Activated B cell treated with CpG ODN at 0.5 μM for 24 hours (primary cell): ENCODE measurements at regions of chr7 and their contacts with region 1.

Region 1: GRCh38 chr7:106736508-106737201 is 75.7 kb upstream of the CCDC71L start:
- DNase-seq: no peak
- ATAC-seq: peak; percentile 99
- H3K4me3 Mint-ChIP-seq: peak overlapping the region; percentile 55
- H3K27ac Mint-ChIP-seq: peak overlapping the region; percentile 79
- H3K4me1 Mint-ChIP-seq: peaks cover 19% of the 10 kb centered on the region
- H3K27me3 Mint-ChIP-seq: no peaks in the 10 kb centered on the region
- CTCF ChIP-seq: no peak

Region 2: GRCh38 chr7:105896407-105896911 is 840.2 kb before region 1 on chr7:
- CTCF ChIA-PET with region 1: no interaction called
- POLR2A ChIA-PET with region 1: no interaction called
- intact Hi-C with region 1: no loop called
- DNase-seq: no peak
- ATAC-seq: no peak
- H3K4me3 Mint-ChIP-seq: no peak overlapping the region
- H3K27ac Mint-ChIP-seq: no peak overlapping the region
- H3K4me1 Mint-ChIP-seq: no peaks in the 10 kb centered on the region
- H3K27me3 Mint-ChIP-seq: no peaks in the 10 kb centered on the region
- CTCF ChIP-seq: no peak

Region 3: DNA sequence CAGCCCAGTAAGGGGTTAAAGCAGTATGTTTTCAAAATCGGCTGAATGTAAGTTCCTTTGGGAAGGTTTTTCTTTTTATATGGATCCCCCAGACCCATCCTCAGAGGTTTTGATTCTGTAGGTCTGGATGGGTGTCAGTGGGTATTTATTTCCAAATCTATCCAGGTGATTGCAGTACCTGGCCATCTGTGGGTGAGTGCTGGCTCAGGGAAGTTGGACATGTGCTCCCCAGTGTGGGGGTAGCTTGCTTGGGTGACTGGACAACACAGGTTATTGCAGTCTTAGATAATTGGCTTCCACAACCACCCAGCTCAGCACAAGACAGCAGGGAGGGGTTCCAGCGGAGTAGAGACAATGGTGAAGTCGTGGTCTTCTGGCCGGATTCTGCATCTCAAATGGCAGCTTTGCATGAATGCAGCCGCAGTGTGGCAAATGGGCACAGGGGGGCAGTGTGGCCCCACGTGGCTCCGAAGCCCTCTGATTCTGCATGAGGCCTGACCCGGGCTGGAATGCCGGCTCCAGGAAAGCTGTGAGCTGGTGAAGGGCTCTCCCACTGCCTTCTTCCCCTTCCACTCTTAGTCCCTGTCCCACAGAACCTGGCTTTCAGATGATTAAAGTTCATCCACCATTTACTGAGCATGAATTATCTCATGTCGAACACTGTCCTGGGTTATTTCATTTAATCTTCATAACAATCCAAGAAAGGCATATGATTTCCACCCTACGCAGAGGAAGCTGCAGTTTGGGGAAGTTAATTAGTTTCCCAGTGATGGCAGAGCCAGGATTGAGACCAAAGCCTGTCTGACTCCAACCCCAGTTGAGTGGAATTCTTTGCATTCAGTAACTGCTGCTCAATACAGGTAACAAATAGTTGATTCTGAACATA is 560.0 kb before region 1 on chr7:
- CTCF ChIA-PET with region 1: interaction called, 37 read pairs
- POLR2A ChIA-PET with region 1: interaction called, 6 read pairs
- intact Hi-C with region 1: loop called (anchors 1 kb)
- DNase-seq: peak; percentile 64
- ATAC-seq: peak; percentile 91
- H3K4me3 Mint-ChIP-seq: no peak overlapping the region
- H3K27ac Mint-ChIP-seq: no peak overlapping the region
- H3K4me1 Mint-ChIP-seq: peaks cover 11% of the 10 kb centered on the region
- H3K27me3 Mint-ChIP-seq: peaks cover 4% of the 10 kb centered on the region
- CTCF ChIP-seq: peak; percentile 41

Region 4: GRCh38 chr7:106542550-106543220 is 194.0 kb before region 1 on chr7:
- CTCF ChIA-PET with region 1: interaction called, 166 read pairs
- POLR2A ChIA-PET with region 1: interaction called, 17 read pairs
- intact Hi-C with region 1: loop called (anchors 1 kb)
- DNase-seq: no peak
- ATAC-seq: peak; percentile 90
- H3K4me3 Mint-ChIP-seq: no peak overlapping the region
- H3K27ac Mint-ChIP-seq: no peak overlapping the region
- H3K4me1 Mint-ChIP-seq: peaks cover 4% of the 10 kb centered on the region
- H3K27me3 Mint-ChIP-seq: peaks cover 2% of the 10 kb centered on the region
- CTCF ChIP-seq: no peak

Region 5: DNA sequence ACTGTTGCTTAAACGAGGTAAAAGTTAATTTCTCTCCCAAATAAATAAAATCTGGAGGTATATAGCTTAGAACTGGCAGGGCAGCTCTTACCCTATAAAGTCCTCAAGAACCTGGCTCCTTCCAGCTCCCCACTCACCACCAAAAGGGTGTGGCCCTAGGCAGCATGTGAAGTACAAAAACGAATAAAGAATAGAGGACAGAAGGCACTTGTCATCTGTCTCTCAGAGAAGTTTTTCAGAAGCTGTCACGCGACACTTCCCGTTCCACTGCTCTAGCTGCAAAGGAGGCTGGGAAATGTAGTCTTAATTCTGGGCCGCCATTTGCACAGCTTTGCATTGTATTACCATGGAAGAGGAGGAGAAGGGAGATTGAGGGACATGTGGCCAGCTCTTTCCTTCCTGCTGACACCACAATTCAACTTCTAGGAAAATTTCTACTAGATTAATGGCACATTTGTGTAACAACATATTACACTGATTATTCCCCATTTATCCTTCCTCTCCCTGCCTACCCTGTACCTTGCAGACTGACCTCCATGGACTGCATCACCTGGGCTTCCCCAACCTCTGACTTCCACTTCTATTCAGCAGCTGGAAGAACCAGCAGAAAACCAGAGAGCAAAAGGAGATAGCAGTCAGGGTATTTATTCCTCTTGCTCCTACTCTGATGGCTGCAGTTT is 137.9 kb before region 1 on chr7:
- CTCF ChIA-PET with region 1: interaction called, 10 read pairs
- POLR2A ChIA-PET with region 1: no interaction called
- intact Hi-C with region 1: loop called (anchors 1 kb)
- DNase-seq: peak; percentile 34
- ATAC-seq: peak; percentile 100
- H3K4me3 Mint-ChIP-seq: peak overlapping the region; percentile 52
- H3K27ac Mint-ChIP-seq: peak overlapping the region; percentile 68
- H3K4me1 Mint-ChIP-seq: peaks cover 6% of the 10 kb centered on the region
- H3K27me3 Mint-ChIP-seq: no peaks in the 10 kb centered on the region
- CTCF ChIP-seq: no peak

Region 6: GRCh38 chr7:106704000-106704840 is 32.4 kb before region 1 on chr7:
- CTCF ChIA-PET with region 1: interaction called, 5 read pairs
- POLR2A ChIA-PET with region 1: interaction called, 6 read pairs
- intact Hi-C with region 1: loop called (anchors 5 kb)
- DNase-seq: no peak
- ATAC-seq: peak; percentile 34
- H3K4me3 Mint-ChIP-seq: no peak overlapping the region
- H3K27ac Mint-ChIP-seq: no peak overlapping the region
- H3K4me1 Mint-ChIP-seq: peaks cover 8% of the 10 kb centered on the region
- H3K27me3 Mint-ChIP-seq: no peaks in the 10 kb centered on the region
- CTCF ChIP-seq: no peak

Region 7: DNA sequence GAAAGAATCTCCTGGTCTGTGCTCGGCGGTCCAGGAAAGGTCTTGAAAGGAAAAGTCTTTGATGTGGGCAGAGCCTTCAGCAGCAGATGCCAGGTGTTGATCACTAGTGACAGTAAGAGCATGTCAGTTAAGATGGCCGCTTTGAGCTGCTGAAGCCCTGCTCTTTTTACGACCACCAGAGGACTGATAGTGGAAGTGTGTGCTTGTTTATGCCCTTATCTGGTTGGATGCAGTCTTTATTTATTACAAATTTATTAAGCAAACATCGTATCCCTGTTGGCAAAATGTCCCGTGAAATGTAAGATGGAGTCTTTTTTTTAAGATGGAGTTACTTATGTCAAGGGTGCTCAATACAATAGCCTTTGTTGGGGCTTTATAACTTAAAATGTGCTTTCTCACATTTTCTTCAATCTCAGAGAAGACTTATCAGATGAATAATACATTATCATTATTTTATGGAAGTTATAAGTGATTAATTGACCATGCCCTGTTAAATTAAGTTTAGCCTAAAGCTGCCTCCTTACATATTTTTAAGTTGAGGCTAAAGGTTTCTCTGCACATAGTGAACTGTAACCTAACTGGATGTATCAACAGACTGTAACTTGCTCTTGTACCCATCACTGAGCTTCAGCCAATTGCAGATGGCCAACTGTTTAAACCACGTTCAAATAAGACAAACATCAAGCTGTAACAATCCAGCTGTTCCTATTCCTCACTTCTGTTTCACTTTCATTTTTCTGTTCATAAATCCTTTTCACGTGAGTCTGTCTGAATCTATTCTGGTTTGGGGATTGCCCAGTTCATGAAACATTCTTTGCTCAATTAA is 31.1 kb after region 1 on chr7:
- CTCF ChIA-PET with region 1: interaction called, 6 read pairs
- POLR2A ChIA-PET with region 1: no interaction called
- intact Hi-C with region 1: loop called (anchors 1 kb)
- DNase-seq: no peak
- ATAC-seq: peak; percentile 77
- H3K4me3 Mint-ChIP-seq: peak overlapping the region; percentile 80
- H3K27ac Mint-ChIP-seq: peak overlapping the region; percentile 87
- H3K4me1 Mint-ChIP-seq: peaks cover 21% of the 10 kb centered on the region
- H3K27me3 Mint-ChIP-seq: no peaks in the 10 kb centered on the region
- CTCF ChIP-seq: no peak